GM12878 (cell line): ENCODE measurements at regions of chr11 and their contacts with region 1.

Region 1: GRCh38 chr11:36746886-36747710 is 149.1 kb upstream of the RAG2 start:
- DNase-seq: peak; percentile 71
- ATAC-seq: peak; percentile 93
- H3K4me3 ChIP-seq: no peak overlapping the region
- H3K27ac ChIP-seq: no peak overlapping the region
- H3K4me1 ChIP-seq: peaks cover 22% of the 10 kb centered on the region
- H3K27me3 ChIP-seq: no peaks in the 10 kb centered on the region
- CTCF ChIP-seq: peak; percentile 99 to 100 (median 100); a peak in 5 of 6 replicates
- EP300 ChIP-seq: no peak
- POLR2A ChIP-seq: no peak
- RAD21 ChIP-seq: peak; percentile 97

Region 2: DNA sequence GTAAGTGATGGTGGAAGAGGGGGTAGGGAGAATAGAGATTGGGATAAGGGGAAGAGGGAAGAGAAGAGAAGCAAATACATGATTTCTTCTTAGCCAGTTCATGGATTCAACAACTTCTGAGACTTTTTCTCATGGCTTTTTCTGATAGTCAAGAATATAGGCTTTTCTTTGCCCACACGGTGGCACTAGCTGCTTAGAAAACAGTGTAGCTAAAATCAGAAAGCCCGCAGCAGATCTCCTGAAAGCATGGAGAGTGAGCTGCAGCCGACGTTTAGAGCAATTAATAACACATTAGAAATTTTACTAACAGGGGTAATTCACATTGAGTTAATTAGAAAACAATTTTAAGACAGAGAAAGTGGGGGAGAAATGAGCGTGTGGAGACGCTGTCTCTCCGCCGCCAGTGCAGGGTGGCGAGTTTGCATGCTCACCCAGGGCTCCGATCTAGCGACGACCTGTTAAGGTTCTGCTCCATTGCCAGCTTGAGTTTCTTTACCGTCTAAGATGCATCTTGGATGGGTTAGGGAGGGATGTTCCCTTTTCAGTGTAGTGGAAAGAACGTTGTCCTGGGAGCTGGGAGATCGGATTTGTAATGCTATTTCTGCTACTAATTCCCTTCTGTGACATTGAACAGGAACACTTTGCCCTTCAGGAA is 182.6 kb before region 1 on chr11:
- CTCF ChIA-PET with region 1: interaction called, 208 read pairs
- POLR2A ChIA-PET with region 1: no interaction called
- RAD21 ChIA-PET with region 1: interaction called, 67 read pairs
- SMC1A ChIA-PET with region 1: interaction called, 46 read pairs
- in situ Hi-C with region 1: loop called (anchors 5 kb)
- intact Hi-C with region 1: loop called (anchors 1 kb)
- DNase-seq: peak; percentile 20
- ATAC-seq: peak; percentile 82
- H3K4me3 ChIP-seq: no peak overlapping the region
- H3K27ac ChIP-seq: no peak overlapping the region
- H3K4me1 ChIP-seq: no peaks in the 10 kb centered on the region
- H3K27me3 ChIP-seq: peaks cover 0 to 8% of the 10 kb centered on the region in 2 experiments; a peak in 1 of 4 replicates
- CTCF ChIP-seq: peak; percentile 43 to 73 (median 55); a peak in 5 of 6 replicates
- EP300 ChIP-seq: no peak
- POLR2A ChIP-seq: no peak
- RAD21 ChIP-seq: peak; percentile 89

Region 3: DNA sequence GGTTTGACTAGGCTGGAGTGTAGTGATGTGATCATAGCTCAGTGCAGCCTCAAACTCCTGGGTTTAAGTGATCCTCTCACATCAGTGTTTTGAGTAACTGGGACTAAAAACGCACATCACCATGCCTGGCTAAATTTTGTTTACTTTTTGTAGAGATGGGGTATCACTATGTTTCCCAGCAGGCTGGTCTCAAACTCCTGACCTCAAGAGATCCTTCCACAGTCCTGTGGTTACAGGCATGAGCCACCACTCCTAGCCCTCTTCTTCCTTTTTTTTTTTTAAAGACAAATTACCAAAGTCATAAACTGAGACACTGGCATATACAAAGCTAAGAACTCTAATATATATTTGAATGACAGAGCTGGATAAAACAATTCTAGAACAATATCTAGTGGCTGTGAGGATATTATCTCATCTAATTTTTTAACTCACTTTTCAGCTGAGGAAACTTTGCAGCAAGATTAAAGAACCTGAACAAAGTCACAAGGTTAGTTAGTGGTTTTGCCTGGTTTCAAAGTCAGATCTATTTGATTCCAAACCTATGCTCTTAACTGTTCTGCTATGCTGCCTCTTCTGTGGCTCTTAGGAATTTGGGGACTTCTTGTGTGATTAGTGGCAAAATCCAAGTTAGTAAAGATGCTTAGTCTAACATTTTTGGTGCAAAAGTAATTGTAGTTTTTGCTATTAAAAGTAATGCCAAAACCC is 53.8 kb before region 1 on chr11:
- CTCF ChIA-PET with region 1: interaction called, 15 read pairs
- POLR2A ChIA-PET with region 1: no interaction called
- RAD21 ChIA-PET with region 1: interaction called, 5 read pairs
- SMC1A ChIA-PET with region 1: interaction called, 5 read pairs
- in situ Hi-C with region 1: no loop called
- intact Hi-C with region 1: no loop called
- DNase-seq: no peak
- ATAC-seq: no peak
- H3K4me3 ChIP-seq: no peak overlapping the region
- H3K27ac ChIP-seq: no peak overlapping the region
- H3K4me1 ChIP-seq: no peaks in the 10 kb centered on the region
- H3K27me3 ChIP-seq: peaks cover 0 to 3% of the 10 kb centered on the region in 2 experiments; a peak in 2 of 4 replicates
- CTCF ChIP-seq: no peak
- EP300 ChIP-seq: no peak
- POLR2A ChIP-seq: no peak
- RAD21 ChIP-seq: no peak

Region 4: GRCh38 chr11:36702330-36703055 is 44.6 kb before region 1 on chr11:
- CTCF ChIA-PET with region 1: interaction called, 197 read pairs
- POLR2A ChIA-PET with region 1: no interaction called
- RAD21 ChIA-PET with region 1: interaction called, 59 read pairs
- SMC1A ChIA-PET with region 1: interaction called, 66 read pairs
- in situ Hi-C with region 1: loop called (anchors 5 kb)
- intact Hi-C with region 1: loop called (anchors 1 kb)
- DNase-seq: peak; percentile 41
- ATAC-seq: peak; percentile 94
- H3K4me3 ChIP-seq: no peak overlapping the region
- H3K27ac ChIP-seq: no peak overlapping the region
- H3K4me1 ChIP-seq: peaks cover 5% of the 10 kb centered on the region; the same call in 1 of the 2 replicates
- H3K27me3 ChIP-seq: no peaks in the 10 kb centered on the region
- CTCF ChIP-seq: peak; percentile 72 to 96 (median 90)
- EP300 ChIP-seq: no peak
- POLR2A ChIP-seq: no peak
- RAD21 ChIP-seq: peak; percentile 97

Region 5: GRCh38 chr11:36711106-36711825 is 35.8 kb before region 1 on chr11:
- CTCF ChIA-PET with region 1: interaction called, 19 read pairs
- POLR2A ChIA-PET with region 1: no interaction called
- RAD21 ChIA-PET with region 1: interaction called, 5 read pairs
- SMC1A ChIA-PET with region 1: interaction called, 6 read pairs
- in situ Hi-C with region 1: loop called (anchors 5 kb)
- intact Hi-C with region 1: no loop called
- DNase-seq: no peak
- ATAC-seq: peak; percentile 66
- H3K4me3 ChIP-seq: no peak overlapping the region
- H3K27ac ChIP-seq: no peak overlapping the region
- H3K4me1 ChIP-seq: no peaks in the 10 kb centered on the region
- H3K27me3 ChIP-seq: no peaks in the 10 kb centered on the region
- CTCF ChIP-seq: peak in 2 of 3 experiments; percentile 18 to 31; a peak in 1 of 6 replicates
- EP300 ChIP-seq: no peak
- POLR2A ChIP-seq: no peak
- RAD21 ChIP-seq: no peak

Region 6: GRCh38 chr11:36724742-36725385 is 22.2 kb before region 1 on chr11:
- CTCF ChIA-PET with region 1: interaction called, 36 read pairs
- POLR2A ChIA-PET with region 1: no interaction called
- RAD21 ChIA-PET with region 1: interaction called, 6 read pairs
- SMC1A ChIA-PET with region 1: interaction called, 8 read pairs
- in situ Hi-C with region 1: no loop called
- intact Hi-C with region 1: loop called (anchors 1 kb)
- DNase-seq: peak; percentile 23
- ATAC-seq: peak; percentile 88
- H3K4me3 ChIP-seq: no peak overlapping the region
- H3K27ac ChIP-seq: no peak overlapping the region
- H3K4me1 ChIP-seq: peaks cover 9% of the 10 kb centered on the region; the same call in 1 of the 2 replicates
- H3K27me3 ChIP-seq: no peaks in the 10 kb centered on the region
- CTCF ChIP-seq: no peak
- EP300 ChIP-seq: no peak
- POLR2A ChIP-seq: no peak
- RAD21 ChIP-seq: no peak

Region 7: GRCh38 chr11:36763187-36763586 is 16.1 kb after region 1 on chr11:
- CTCF ChIA-PET with region 1: interaction called, 15 read pairs
- POLR2A ChIA-PET with region 1: no interaction called
- RAD21 ChIA-PET with region 1: no interaction called
- SMC1A ChIA-PET with region 1: interaction called, 4 read pairs
- in situ Hi-C with region 1: no loop called
- intact Hi-C with region 1: no loop called
- DNase-seq: no peak
- ATAC-seq: peak; percentile 52
- H3K4me3 ChIP-seq: no peak overlapping the region
- H3K27ac ChIP-seq: no peak overlapping the region
- H3K4me1 ChIP-seq: no peaks in the 10 kb centered on the region
- H3K27me3 ChIP-seq: no peaks in the 10 kb centered on the region
- CTCF ChIP-seq: no peak
- EP300 ChIP-seq: no peak
- POLR2A ChIP-seq: no peak
- RAD21 ChIP-seq: no peak

Region 8: DNA sequence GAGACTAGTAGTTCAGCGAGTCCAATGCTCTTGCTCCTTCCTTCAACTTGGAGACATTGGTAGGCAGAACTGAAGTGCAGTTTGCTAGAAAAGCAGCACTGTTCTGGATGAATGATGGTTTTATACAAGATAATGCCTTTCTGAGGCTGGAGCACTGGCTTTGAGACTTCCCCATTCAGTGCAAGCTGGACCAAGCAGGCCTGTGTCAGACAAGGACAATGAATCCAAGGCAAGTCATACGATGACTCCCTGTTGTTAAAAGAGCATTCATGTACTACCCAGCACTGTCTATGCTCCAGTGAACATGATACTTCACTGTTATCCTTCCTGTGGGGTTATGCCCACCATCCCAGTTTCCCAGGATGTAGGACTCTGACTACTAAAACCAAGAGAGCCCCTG is 93.3 kb after region 1 on chr11:
- CTCF ChIA-PET with region 1: no interaction called
- POLR2A ChIA-PET with region 1: no interaction called
- RAD21 ChIA-PET with region 1: no interaction called
- SMC1A ChIA-PET with region 1: no interaction called
- in situ Hi-C with region 1: no loop called
- intact Hi-C with region 1: no loop called
- DNase-seq: no peak
- ATAC-seq: no peak
- H3K4me3 ChIP-seq: no peak overlapping the region
- H3K27ac ChIP-seq: no peak overlapping the region
- H3K4me1 ChIP-seq: no peaks in the 10 kb centered on the region
- H3K27me3 ChIP-seq: no peaks in the 10 kb centered on the region
- CTCF ChIP-seq: no peak
- EP300 ChIP-seq: no peak
- POLR2A ChIP-seq: no peak
- RAD21 ChIP-seq: no peak

Region 9: DNA sequence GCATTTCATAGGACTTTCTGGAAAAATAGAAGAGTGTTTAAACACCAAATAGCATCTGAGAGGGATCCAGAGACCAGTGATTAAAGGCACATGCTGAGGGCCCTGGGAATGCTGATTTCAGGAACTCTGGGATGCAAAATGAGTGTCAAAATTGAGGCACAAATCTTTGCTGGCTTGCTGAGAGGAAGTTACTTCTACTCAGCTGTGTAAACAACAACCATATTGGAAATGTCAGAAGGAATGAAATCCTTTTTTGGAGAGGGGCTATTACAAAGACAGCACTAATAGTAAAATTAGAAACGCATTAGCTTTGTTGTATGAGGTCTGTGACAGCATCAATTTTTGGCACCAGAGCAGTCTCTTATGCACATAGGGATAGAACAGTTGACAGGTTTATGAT is 118.7 kb after region 1 on chr11:
- CTCF ChIA-PET with region 1: no interaction called
- POLR2A ChIA-PET with region 1: no interaction called
- RAD21 ChIA-PET with region 1: no interaction called
- SMC1A ChIA-PET with region 1: no interaction called
- in situ Hi-C with region 1: no loop called
- intact Hi-C with region 1: no loop called
- DNase-seq: no peak
- ATAC-seq: no peak
- H3K4me3 ChIP-seq: no peak overlapping the region
- H3K27ac ChIP-seq: no peak overlapping the region
- H3K4me1 ChIP-seq: no peaks in the 10 kb centered on the region
- H3K27me3 ChIP-seq: no peaks in the 10 kb centered on the region
- CTCF ChIP-seq: no peak
- EP300 ChIP-seq: no peak
- POLR2A ChIP-seq: no peak
- RAD21 ChIP-seq: no peak